ENCODE measurements at regions of chr1 and their contacts with region 1.

Region 1: GRCh38 chr1:23743287-23744052 is at the start of gene ELOA:
- DNase-seq: peak; percentile 87
- ATAC-seq: peak; percentile 96
- total RNA-seq, gene ELOA: 34.5 TPM

Region 2: GRCh38 chr1:23691499-23692307 is 51.8 kb before region 1 on chr1 and contains the start of gene RPL11:
- intact Hi-C with region 1: loop called (anchors 10 kb)
- DNase-seq: peak; percentile 94
- ATAC-seq: peak; percentile 100
- total RNA-seq, gene RPL11: 570 TPM

Measured in Right ventricle myocardium superior (tissue), 1 donor.